Activated T-helper 2 cell treated with anti-CD3 and anti-CD28 coated beads, Interferon-gamma antibody, Interleukin-2, Interleukin-4, amounts not matched to agents 10 μg/mL and 5 μg/mL and 100 μg/mL, durations not matched to agents 14 hours and 24 hours and 36 hours (primary cell): ENCODE measurements at regions of chr18 and their contacts with region 1.

Region 1: DNA sequence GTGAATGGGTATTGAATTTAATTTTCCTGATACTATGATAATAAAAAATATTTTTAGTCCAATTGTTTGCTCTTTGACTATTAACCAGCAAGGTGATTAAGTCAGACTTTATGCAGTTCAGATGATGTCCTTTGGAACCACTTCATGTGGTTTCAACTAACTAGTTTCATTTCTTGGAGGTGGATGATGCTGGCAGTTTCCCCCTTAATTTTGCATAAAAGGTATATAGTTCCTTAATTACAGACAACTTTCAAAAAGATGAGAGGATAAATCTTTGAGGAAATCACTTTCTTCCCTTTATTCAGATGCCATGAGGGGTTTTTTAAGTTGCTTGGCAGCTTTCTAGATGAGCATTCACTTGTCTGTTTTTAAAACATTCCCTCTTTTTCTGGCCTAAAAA is 223.1 kb downstream of the PHLPP1 start:
- DNase-seq: no peak
- H3K4me3 Mint-ChIP-seq: no peak overlapping the region
- H3K27ac Mint-ChIP-seq: no peak overlapping the region
- H3K4me1 Mint-ChIP-seq: peaks cover 29% of the 10 kb centered on the region
- H3K27me3 Mint-ChIP-seq: no peaks in the 10 kb centered on the region

Region 2: DNA sequence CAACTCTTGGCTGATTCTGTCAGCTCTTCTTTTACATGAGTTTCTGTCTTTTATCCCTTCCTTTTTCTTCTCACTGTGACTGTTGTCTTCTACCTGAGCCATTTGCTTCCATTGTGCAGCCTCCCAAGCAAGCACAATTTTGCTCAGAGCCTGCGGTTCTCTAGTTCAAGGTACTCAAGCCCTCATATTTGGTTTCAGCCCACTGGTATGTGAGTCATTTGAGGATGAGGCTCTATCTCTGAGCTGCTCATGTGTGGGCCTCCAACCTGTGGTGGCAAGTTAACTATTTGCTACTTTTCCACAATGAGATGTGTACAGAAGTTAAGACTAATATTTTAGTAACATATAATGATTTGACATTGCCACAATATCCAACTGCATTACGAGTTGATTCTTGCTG is 40.1 kb before region 1 on chr18:
- intact Hi-C with region 1: loop called (anchors 5 kb)
- DNase-seq: no peak
- H3K4me3 Mint-ChIP-seq: no peak overlapping the region
- H3K27ac Mint-ChIP-seq: peak overlapping the region; percentile 53
- H3K4me1 Mint-ChIP-seq: peaks cover 17% of the 10 kb centered on the region
- H3K27me3 Mint-ChIP-seq: no peaks in the 10 kb centered on the region